Naive thymus-derived CD4-positive, alpha-beta T cell (primary cell): ENCODE measurements at regions of chr3 and their contacts with region 1.

Region 1: DNA sequence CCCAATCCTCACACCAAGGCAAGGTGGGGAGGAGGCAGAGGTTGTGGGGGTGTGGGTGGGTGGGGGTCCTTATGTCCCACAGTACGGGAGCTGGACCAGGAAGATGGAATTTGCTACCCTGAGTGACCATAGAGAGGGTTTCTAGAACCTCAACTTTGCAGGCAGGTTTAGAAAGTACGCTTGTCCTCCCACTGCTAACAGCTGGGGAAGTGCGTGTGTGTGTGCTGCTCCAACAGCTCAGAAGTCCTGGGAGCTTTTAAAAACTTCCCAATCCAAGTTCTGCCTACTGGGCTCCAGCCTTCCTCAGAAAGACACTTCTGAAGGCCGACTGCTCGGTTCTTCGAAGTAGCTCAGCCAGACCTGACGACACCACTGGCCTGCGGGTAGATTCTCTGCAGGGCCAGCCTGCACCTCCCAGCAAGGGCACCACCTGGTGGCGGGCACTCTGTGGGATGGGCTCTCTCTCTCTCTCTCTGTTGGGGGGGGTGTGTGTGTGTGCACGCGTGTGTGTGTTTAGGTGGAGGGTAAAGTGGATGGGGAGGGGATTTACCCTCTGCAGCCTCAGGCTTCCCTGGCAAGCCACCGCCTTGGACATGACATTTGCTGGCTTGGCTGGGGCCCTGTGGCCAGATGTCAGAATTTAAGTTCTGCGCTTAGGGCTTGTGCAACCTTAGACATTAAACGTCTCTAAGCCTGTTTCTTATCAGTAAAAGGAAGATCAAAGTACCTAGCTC is 15.6 kb downstream of the TMEM158 start:
- DNase-seq: peak; percentile 61 to 81 (median 77)
- ATAC-seq: peak; percentile 99
- H3K4me3 ChIP-seq: no peak overlapping the region
- H3K4me3 Mint-ChIP-seq: peak overlapping the region in 6 of 10 donors; percentile 23 to 66 (median 48)
- H3K27ac ChIP-seq: no peak overlapping the region
- H3K27ac Mint-ChIP-seq: peak overlapping the region in 3 of 9 donors; percentile 5 to 76 (median 31)
- H3K4me1 ChIP-seq: peaks cover 3 to 9% of the 10 kb centered on the region in 2 donors
- H3K4me1 Mint-ChIP-seq: peaks cover 11 to 26% (median 18%) of the 10 kb centered on the region in 7 donors
- H3K27me3 ChIP-seq: no peaks in the 10 kb centered on the region
- H3K27me3 Mint-ChIP-seq: peaks cover 11 to 32% (median 15%) of the 10 kb centered on the region in 5 donors

Region 2: GRCh38 chr3:45043728-45044299 is 166.7 kb before region 1 on chr3:
- CTCF ChIA-PET with region 1: interaction called, 379 read pairs
- POLR2A ChIA-PET with region 1: interaction called, 17 read pairs
- intact Hi-C with region 1: loop called (anchors 1 kb)
- DNase-seq: no peak
- ATAC-seq: no peak
- H3K4me3 ChIP-seq: no peak overlapping the region
- H3K4me3 Mint-ChIP-seq: no peak overlapping the region
- H3K27ac ChIP-seq: no peak overlapping the region
- H3K27ac Mint-ChIP-seq: no peak overlapping the region
- H3K4me1 ChIP-seq: peaks cover 0 to 15% of the 10 kb centered on the region in 2 donors
- H3K4me1 Mint-ChIP-seq: peaks cover 2 to 24% (median 23%) of the 10 kb centered on the region in 7 donors
- H3K27me3 ChIP-seq: no peaks in the 10 kb centered on the region
- H3K27me3 Mint-ChIP-seq: peaks cover 4 to 36% (median 11%) of the 10 kb centered on the region in 5 donors

Region 3: DNA sequence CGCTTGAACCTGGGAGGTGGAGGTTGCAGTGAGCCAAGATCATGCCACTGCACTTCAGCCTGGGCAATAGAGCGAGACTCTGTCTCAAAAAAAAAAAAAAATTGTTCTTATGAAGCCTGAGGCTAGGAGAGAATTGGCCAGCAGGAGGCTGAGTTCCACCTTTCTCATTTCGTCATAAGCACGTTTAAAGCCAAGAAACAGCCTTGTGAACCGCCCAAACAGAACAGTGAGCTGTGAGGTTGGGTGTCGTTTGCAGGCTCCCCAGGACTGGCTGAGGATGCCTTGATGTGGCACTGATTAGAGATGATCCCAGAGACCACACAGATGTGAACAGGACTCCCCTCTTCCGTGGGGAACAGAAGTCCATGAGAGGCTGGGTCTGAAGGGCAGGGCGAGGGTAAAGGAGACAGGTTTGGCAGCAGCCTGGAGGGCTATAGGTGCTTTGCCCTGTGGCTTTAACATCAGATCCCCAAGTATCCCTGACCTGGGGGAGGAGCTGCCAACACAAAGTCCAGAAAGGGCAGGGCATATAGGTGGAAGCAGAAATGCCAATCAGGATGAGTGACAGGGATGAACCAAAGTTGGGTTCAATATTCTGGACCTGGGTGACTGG is 131.5 kb before region 1 on chr3:
- CTCF ChIA-PET with region 1: interaction called, 14 read pairs
- POLR2A ChIA-PET with region 1: no interaction called
- intact Hi-C with region 1: loop called (anchors 1 kb)
- DNase-seq: peak in 5 of 9 donors; percentile 8 to 51 (median 33)
- ATAC-seq: peak; percentile 32
- H3K4me3 ChIP-seq: no peak overlapping the region
- H3K4me3 Mint-ChIP-seq: no peak overlapping the region
- H3K27ac ChIP-seq: no peak overlapping the region
- H3K27ac Mint-ChIP-seq: peak overlapping the region in 4 of 9 donors; percentile 48 to 82 (median 63)
- H3K4me1 ChIP-seq: no peaks in the 10 kb centered on the region
- H3K4me1 Mint-ChIP-seq: peaks cover 3 to 13% (median 4%) of the 10 kb centered on the region in 7 donors
- H3K27me3 ChIP-seq: no peaks in the 10 kb centered on the region
- H3K27me3 Mint-ChIP-seq: peaks cover 0 to 26% (median 0%) of the 10 kb centered on the region in 5 donors

Region 4: GRCh38 chr3:45119824-45120614 is 90.5 kb before region 1 on chr3:
- CTCF ChIA-PET with region 1: interaction called, 13 read pairs
- POLR2A ChIA-PET with region 1: no interaction called
- intact Hi-C with region 1: loop called in 1 of 2 experiments (anchors 5 kb)
- DNase-seq: no peak
- ATAC-seq: no peak
- H3K4me3 ChIP-seq: no peak overlapping the region
- H3K4me3 Mint-ChIP-seq: no peak overlapping the region
- H3K27ac ChIP-seq: no peak overlapping the region
- H3K27ac Mint-ChIP-seq: peak overlapping the region in 1 of 9 donors; percentile 23
- H3K4me1 ChIP-seq: peaks cover 17 to 22% of the 10 kb centered on the region in 2 donors
- H3K4me1 Mint-ChIP-seq: peaks cover 16 to 62% (median 27%) of the 10 kb centered on the region in 7 donors
- H3K27me3 ChIP-seq: peaks cover 0 to 3% of the 10 kb centered on the region in 2 donors
- H3K27me3 Mint-ChIP-seq: peaks cover 0 to 43% (median 0%) of the 10 kb centered on the region in 5 donors

Region 5: DNA sequence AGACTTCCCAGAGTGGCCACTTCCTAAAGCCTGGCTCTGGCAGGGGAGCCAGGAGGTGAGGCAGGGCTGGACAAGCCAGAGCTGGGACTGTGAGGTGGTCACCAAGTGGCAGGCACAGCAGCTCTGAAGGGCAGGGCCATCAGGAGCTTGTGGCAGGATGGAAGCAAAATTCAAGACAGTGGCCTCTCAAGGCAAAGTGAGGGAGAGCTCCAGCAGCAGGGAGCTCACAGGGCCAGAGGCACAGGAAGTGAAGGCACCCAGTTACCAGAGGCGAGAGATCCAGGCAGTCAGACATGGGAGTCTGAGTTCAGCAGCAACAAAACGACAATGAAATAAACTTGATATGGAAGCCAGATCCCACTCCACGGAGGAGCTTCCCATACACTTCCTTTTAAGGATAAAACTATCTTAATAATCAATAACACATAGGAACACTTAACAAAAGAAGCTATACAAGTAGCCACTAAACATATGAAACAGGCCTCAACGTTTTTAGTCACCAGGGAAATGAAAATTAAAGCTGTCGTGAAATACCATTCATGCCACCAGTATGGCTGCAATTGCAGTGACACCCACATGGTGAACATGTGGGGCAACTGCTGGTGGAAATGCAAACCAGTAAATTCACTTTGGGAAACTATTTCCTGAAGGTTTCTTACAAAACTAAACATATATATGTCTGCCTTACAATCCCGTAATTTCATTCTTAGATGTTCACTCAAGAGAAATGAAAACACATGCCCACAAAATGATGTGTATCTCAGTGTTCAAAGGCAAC is 51.0 kb after region 1 on chr3:
- CTCF ChIA-PET with region 1: no interaction called
- POLR2A ChIA-PET with region 1: no interaction called
- intact Hi-C with region 1: no loop called
- DNase-seq: no peak
- ATAC-seq: no peak
- H3K4me3 ChIP-seq: no peak overlapping the region
- H3K4me3 Mint-ChIP-seq: no peak overlapping the region
- H3K27ac ChIP-seq: no peak overlapping the region
- H3K27ac Mint-ChIP-seq: no peak overlapping the region
- H3K4me1 ChIP-seq: no peaks in the 10 kb centered on the region
- H3K4me1 Mint-ChIP-seq: no peaks in the 10 kb centered on the region
- H3K27me3 ChIP-seq: no peaks in the 10 kb centered on the region
- H3K27me3 Mint-ChIP-seq: peaks cover 0 to 20% (median 7%) of the 10 kb centered on the region in 5 donors

Region 6: DNA sequence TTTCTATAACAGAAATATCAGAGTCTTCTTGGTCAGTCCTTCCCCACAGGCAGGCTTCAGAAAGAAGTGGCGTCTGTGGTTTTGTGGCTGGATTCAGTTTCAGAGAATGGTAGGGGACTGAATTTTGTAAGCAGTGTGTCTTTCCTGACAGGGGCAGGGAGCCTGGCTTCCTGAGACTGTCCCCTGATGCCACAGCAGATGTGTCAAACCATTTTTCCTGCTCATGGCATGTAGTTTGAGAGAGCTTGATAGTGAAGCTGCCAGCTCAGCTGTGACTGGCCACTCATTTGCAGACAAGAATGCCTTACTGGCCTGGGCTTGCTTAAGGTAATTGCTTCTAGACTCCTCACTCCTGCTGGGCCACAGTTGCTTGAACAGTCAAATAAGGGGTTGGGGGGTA is 204.3 kb after region 1 on chr3:
- CTCF ChIA-PET with region 1: no interaction called
- POLR2A ChIA-PET with region 1: no interaction called
- intact Hi-C with region 1: no loop called
- DNase-seq: no peak
- ATAC-seq: no peak
- H3K4me3 ChIP-seq: no peak overlapping the region
- H3K4me3 Mint-ChIP-seq: no peak overlapping the region
- H3K27ac ChIP-seq: no peak overlapping the region
- H3K27ac Mint-ChIP-seq: no peak overlapping the region
- H3K4me1 ChIP-seq: no peaks in the 10 kb centered on the region
- H3K4me1 Mint-ChIP-seq: peaks cover 0 to 16% (median 0%) of the 10 kb centered on the region in 7 donors
- H3K27me3 ChIP-seq: no peaks in the 10 kb centered on the region
- H3K27me3 Mint-ChIP-seq: no peaks in the 10 kb centered on the region

Region 7: GRCh38 chr3:45499529-45499928 is 289.1 kb after region 1 on chr3:
- CTCF ChIA-PET with region 1: interaction called, 7 read pairs
- POLR2A ChIA-PET with region 1: no interaction called
- intact Hi-C with region 1: loop called in 1 of 2 experiments (anchors 1 kb)
- DNase-seq: peak in 3 of 9 donors; percentile 19 to 33 (median 23)
- ATAC-seq: no peak
- H3K4me3 ChIP-seq: no peak overlapping the region
- H3K4me3 Mint-ChIP-seq: no peak overlapping the region
- H3K27ac ChIP-seq: no peak overlapping the region
- H3K27ac Mint-ChIP-seq: peak overlapping the region in 2 of 9 donors; percentile 47 to 76
- H3K4me1 ChIP-seq: peaks cover 0 to 26% of the 10 kb centered on the region in 2 donors
- H3K4me1 Mint-ChIP-seq: peaks cover 5 to 32% (median 25%) of the 10 kb centered on the region in 7 donors
- H3K27me3 ChIP-seq: no peaks in the 10 kb centered on the region
- H3K27me3 Mint-ChIP-seq: no peaks in the 10 kb centered on the region